ENCODE measurements at regions of chr6 and their contacts with region 1.

Region 1: GRCh38 chr6:87817183-87817582 is 115.2 kb upstream of the AKIRIN2 start:
- DNase-seq: no peak
- ATAC-seq: no peak

Region 2: GRCh38 chr6:87870556-87870955 is 53.4 kb after region 1 on chr6:
- intact Hi-C with region 1: no loop called
- DNase-seq: no peak
- ATAC-seq: no peak

Region 3: GRCh38 chr6:87905101-87905641 is 88.0 kb after region 1 on chr6:
- intact Hi-C with region 1: no loop called
- DNase-seq: no peak
- ATAC-seq: no peak

Region 4: DNA sequence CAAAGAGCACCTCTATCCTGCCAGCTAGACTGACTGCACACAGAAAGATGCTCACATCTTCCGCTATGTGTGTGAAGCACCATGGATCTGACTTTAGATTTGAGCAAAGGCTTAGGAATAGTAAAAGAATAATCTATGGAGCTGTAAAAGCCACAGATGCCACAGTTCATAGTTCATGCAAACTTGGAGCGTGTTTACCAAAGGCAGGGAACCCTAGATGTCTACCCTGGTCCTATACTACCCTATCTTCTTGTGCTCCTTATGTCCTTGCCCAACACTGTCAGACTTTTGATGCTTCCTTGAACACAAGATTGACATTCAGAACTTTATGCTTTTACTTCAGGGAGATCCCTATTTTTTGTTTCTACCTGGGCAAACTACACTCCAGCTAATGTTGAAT is 269.6 kb after region 1 on chr6:
- intact Hi-C with region 1: no loop called
- DNase-seq: no peak
- ATAC-seq: no peak

Region 5: DNA sequence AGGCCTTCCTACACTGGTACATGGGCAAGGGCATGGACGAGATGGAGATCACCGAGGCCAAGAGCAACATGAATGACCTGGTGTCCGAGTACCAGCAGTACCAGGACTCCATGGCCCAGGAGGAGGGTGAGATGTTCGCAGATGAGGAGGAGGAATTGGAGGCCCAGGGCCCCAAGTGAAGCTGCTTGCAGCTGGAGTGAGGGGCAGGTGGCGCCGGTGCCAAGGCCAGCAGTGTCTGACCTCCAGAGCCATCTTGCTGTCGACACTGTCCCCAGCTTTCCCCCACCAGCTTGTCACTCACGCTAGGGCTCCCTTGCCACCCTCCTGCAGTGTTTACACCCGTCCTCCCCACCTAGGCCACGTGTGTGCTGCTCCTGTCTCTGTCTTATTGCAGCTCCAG is 1485.8 kb after region 1 on chr6:
- intact Hi-C with region 1: loop called (anchors 5 kb)
- DNase-seq: no peak
- ATAC-seq: no peak

Measured in left ventricle myocardium superior (tissue), 1 donor.